ENCODE measurements at regions of chr2 and their contacts with region 1.

Region 1: GRCh38 chr2:201118121-201118960 is 2.4 kb downstream of the CFLAR start:
- H3K4me3 Mint-ChIP-seq: peak overlapping the region; percentile 99
- H3K27ac Mint-ChIP-seq: peak overlapping the region; percentile 98
- H3K4me1 Mint-ChIP-seq: peaks cover 43% of the 10 kb centered on the region
- H3K27me3 Mint-ChIP-seq: no peaks in the 10 kb centered on the region

Region 2: DNA sequence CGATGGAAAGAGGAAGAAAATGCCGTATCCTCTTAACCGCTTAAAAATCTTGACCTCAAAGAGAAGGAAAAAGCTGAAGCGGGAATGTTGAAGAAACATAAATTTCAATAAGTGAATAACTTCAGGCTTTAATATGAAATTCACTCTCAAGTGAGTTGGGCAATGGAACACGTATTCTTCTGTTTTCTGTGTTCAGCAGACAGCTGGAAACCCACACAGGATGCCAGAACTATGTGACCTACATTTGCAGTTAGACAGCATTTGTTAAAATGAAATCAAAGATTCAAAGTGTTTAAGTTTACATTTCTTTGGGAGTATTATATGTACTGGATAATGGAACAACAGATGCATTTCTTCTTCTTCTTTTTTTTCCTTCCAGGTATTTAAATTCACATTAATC is 892.4 kb before region 1 on chr2:
- intact Hi-C with region 1: no loop called
- H3K4me3 Mint-ChIP-seq: no peak overlapping the region
- H3K27ac Mint-ChIP-seq: no peak overlapping the region
- H3K4me1 Mint-ChIP-seq: peaks cover 10% of the 10 kb centered on the region
- H3K27me3 Mint-ChIP-seq: no peaks in the 10 kb centered on the region

Region 3: GRCh38 chr2:201130524-201131186 is 12.3 kb after region 1 on chr2:
- intact Hi-C with region 1: loop called (anchors 1 kb)
- H3K4me3 Mint-ChIP-seq: peak overlapping the region; percentile 85
- H3K27ac Mint-ChIP-seq: peak overlapping the region; percentile 95
- H3K4me1 Mint-ChIP-seq: peaks cover 71% of the 10 kb centered on the region
- H3K27me3 Mint-ChIP-seq: no peaks in the 10 kb centered on the region

Region 4: GRCh38 chr2:201158111-201158929 is 40.0 kb after region 1 on chr2:
- intact Hi-C with region 1: loop called (anchors 1 kb)
- H3K4me3 Mint-ChIP-seq: peak overlapping the region; percentile 45
- H3K27ac Mint-ChIP-seq: peak overlapping the region; percentile 94
- H3K4me1 Mint-ChIP-seq: peaks cover 60% of the 10 kb centered on the region
- H3K27me3 Mint-ChIP-seq: no peaks in the 10 kb centered on the region

Region 5: GRCh38 chr2:201171259-201171814 is 53.0 kb after region 1 on chr2:
- intact Hi-C with region 1: loop called (anchors 5 kb)
- H3K4me3 Mint-ChIP-seq: no peak overlapping the region
- H3K27ac Mint-ChIP-seq: no peak overlapping the region
- H3K4me1 Mint-ChIP-seq: peaks cover 30% of the 10 kb centered on the region
- H3K27me3 Mint-ChIP-seq: no peaks in the 10 kb centered on the region

Measured in dendritic cell treated with granulocyte-macrophage colony-stimulating factor and Interleukin-4, amounts not matched to agents 40 ng/mL and 50 ng/mL, for 4 days (primary cell).